ENCODE measurements at regions of chr15 and their contacts with region 1.

Region 1: GRCh38 chr15:31435261-31435911 is 108.8 kb downstream of the KLF13 start:
- DNase-seq: peak; percentile 92
- H3K4me3 Mint-ChIP-seq: peak overlapping the region; percentile 64
- H3K27ac Mint-ChIP-seq: peak overlapping the region; percentile 99
- H3K4me1 Mint-ChIP-seq: peaks cover 76% of the 10 kb centered on the region
- H3K27me3 Mint-ChIP-seq: no peaks in the 10 kb centered on the region

Region 2: DNA sequence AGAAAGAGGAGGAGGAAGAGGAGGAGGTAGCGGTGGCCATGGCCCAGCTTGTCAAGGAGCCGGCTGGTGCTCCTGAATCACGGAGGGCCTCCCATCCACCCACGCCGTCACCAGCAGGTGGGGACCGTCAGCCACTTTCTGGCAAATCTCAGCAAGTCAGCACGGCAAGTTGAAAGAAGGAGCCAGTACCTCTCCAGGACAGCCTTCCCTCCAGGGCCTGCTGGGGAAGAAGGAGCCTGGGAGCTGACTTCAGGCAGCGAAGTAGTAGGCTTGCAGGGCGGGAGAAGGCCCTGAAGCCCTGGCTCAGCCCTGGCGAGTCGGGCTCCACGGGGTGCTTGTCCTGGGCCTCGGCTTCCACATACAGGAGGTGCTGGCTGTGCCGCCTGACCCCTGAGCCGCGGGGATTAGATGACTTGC is 234.6 kb before region 1 on chr15:
- CTCF ChIA-PET with region 1: interaction called, 5 read pairs
- POLR2A ChIA-PET with region 1: no interaction called
- intact Hi-C with region 1: loop called (anchors 5 kb)
- DNase-seq: peak; percentile 82
- H3K4me3 Mint-ChIP-seq: no peak overlapping the region
- H3K27ac Mint-ChIP-seq: no peak overlapping the region
- H3K4me1 Mint-ChIP-seq: peaks cover 20% of the 10 kb centered on the region
- H3K27me3 Mint-ChIP-seq: no peaks in the 10 kb centered on the region

Region 3: GRCh38 chr15:31326156-31326732 is 109.1 kb before region 1 on chr15:
- CTCF ChIA-PET with region 1: interaction called, 9 read pairs
- POLR2A ChIA-PET with region 1: interaction called, 31 read pairs
- intact Hi-C with region 1: loop called (anchors 1 kb)
- DNase-seq: peak; percentile 100
- H3K4me3 Mint-ChIP-seq: peak overlapping the region; percentile 88
- H3K27ac Mint-ChIP-seq: peak overlapping the region; percentile 80
- H3K4me1 Mint-ChIP-seq: peaks cover 32% of the 10 kb centered on the region
- H3K27me3 Mint-ChIP-seq: no peaks in the 10 kb centered on the region

Region 4: GRCh38 chr15:31365655-31366127 is 69.7 kb before region 1 on chr15:
- CTCF ChIA-PET with region 1: interaction called, 71 read pairs
- POLR2A ChIA-PET with region 1: interaction called, 22 read pairs
- intact Hi-C with region 1: loop called (anchors 1 kb)
- DNase-seq: peak; percentile 89
- H3K4me3 Mint-ChIP-seq: peak overlapping the region; percentile 61
- H3K27ac Mint-ChIP-seq: peak overlapping the region; percentile 97
- H3K4me1 Mint-ChIP-seq: peaks cover 99% of the 10 kb centered on the region
- H3K27me3 Mint-ChIP-seq: no peaks in the 10 kb centered on the region

Region 5: GRCh38 chr15:31472636-31473384 is 37.4 kb after region 1 on chr15:
- CTCF ChIA-PET with region 1: interaction called, 36 read pairs
- POLR2A ChIA-PET with region 1: interaction called, 45 read pairs
- intact Hi-C with region 1: loop called (anchors 1 kb)
- DNase-seq: peak; percentile 78
- H3K4me3 Mint-ChIP-seq: peak overlapping the region; percentile 65
- H3K27ac Mint-ChIP-seq: peak overlapping the region; percentile 87
- H3K4me1 Mint-ChIP-seq: peaks cover 49% of the 10 kb centered on the region
- H3K27me3 Mint-ChIP-seq: no peaks in the 10 kb centered on the region

Region 6: GRCh38 chr15:31516874-31517273 is 81.5 kb after region 1 on chr15:
- CTCF ChIA-PET with region 1: no interaction called
- POLR2A ChIA-PET with region 1: no interaction called
- intact Hi-C with region 1: no loop called
- DNase-seq: no peak
- H3K4me3 Mint-ChIP-seq: no peak overlapping the region
- H3K27ac Mint-ChIP-seq: no peak overlapping the region
- H3K4me1 Mint-ChIP-seq: peaks cover 7% of the 10 kb centered on the region
- H3K27me3 Mint-ChIP-seq: peaks cover 8% of the 10 kb centered on the region

Measured in activated CD4-positive, alpha-beta memory T cell treated with anti-CD3 and anti-CD28 coated beads for 36 hours (primary cell).